Heart left ventricle (tissue), 16 donors: ENCODE measurements at regions of chr15 and their contacts with region 1.

Region 1: GRCh38 chr15:66386204-66387123 is at the start of gene MAP2K1:
- DNase-seq: peak; percentile 99 to 100 (median 99)
- ATAC-seq: peak; percentile 98 to 99 (median 99)
- H3K4me3 ChIP-seq: peak within 1 kb of the TSS; percentile 79 to 92 (median 84)
- H3K27ac ChIP-seq: peak within 1 kb of the TSS; percentile 66 to 97 (median 92)
- H3K4me1 ChIP-seq: peaks cover 0 to 47% (median 20%) of the 10 kb centered on the region in 12 donors
- H3K27me3 ChIP-seq: no peaks in the 10 kb centered on the region
- CTCF ChIP-seq: peak; percentile 54 to 98 (median 84)
- POLR2A ChIP-seq: peak in 1 of 2 donors; percentile 72
- total RNA-seq, gene MAP2K1: 34.6 to 134 (median 39.3) TPM

Region 2: DNA sequence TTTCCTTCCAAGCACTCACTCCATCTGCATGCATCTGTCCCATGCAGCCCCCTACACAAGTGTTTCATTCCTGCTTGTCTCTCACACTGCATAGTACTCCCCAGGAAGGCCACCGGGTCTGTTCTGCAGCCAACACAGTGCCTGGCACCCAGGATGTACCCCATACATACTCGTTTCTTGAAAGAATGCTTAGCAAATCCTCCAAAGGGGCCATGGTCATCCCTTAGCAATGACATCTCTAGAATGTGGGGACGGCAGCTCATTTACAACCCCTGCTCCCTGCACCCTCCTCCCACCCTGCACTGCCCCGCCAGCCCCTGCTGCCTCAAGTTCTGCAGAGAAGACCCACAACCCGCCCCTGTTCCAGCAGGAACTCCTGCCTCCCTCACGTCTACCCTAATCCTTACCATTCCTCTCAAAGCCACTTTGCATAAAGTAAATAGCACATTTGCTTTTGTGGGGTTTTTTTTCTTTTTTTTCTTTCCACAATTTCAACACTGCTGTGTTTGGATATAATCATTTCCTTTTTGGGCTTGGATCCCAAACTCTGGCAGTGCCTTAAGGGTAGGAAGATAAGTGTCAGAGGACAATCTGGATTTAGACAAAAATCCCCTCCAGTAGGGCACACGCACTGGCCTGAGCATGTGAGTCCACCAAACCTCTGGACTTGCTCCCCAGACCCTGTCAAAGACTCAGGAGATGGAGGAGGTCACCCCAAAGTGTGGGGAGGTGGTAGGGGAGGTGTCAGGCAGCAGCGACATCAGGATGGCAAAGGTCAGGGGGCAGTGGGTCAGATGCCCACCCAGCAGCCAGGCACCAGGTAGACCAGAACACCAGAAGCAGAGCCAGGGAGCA is 201.3 kb before region 1 on chr15:
- intact Hi-C with region 1: no loop called
- DNase-seq: no peak
- ATAC-seq: no peak
- H3K4me3 ChIP-seq: no peak overlapping the region
- H3K27ac ChIP-seq: no peak overlapping the region
- H3K4me1 ChIP-seq: no peaks in the 10 kb centered on the region
- H3K27me3 ChIP-seq: peaks cover 0 to 48% (median 10%) of the 10 kb centered on the region in 9 donors
- CTCF ChIP-seq: no peak
- POLR2A ChIP-seq: no peak

Region 3: DNA sequence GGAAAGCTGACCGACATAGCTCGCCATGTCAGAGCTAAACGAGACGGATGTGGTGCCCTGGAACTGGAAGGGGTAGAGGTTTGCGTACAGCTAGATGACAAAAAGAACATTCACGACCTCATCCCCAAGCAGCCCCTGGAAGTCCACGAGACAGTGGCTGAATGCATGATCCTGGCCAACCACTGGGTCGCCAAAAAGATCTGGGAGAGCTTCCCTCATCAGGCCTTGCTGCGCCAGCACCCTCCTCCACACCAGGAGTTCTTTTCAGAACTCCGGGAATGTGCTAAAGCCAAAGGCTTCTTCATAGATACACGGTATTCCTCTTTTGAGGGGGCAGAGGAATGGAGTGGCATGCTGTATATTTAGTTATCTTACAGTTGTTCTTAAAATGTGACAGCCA is 60.4 kb before region 1 on chr15:
- intact Hi-C with region 1: loop called in 1 of 10 experiments (anchors 10 kb)
- DNase-seq: no peak
- ATAC-seq: no peak
- H3K4me3 ChIP-seq: no peak overlapping the region
- H3K27ac ChIP-seq: no peak overlapping the region
- H3K4me1 ChIP-seq: no peaks in the 10 kb centered on the region
- H3K27me3 ChIP-seq: no peaks in the 10 kb centered on the region
- CTCF ChIP-seq: no peak
- POLR2A ChIP-seq: no peak

Region 4: DNA sequence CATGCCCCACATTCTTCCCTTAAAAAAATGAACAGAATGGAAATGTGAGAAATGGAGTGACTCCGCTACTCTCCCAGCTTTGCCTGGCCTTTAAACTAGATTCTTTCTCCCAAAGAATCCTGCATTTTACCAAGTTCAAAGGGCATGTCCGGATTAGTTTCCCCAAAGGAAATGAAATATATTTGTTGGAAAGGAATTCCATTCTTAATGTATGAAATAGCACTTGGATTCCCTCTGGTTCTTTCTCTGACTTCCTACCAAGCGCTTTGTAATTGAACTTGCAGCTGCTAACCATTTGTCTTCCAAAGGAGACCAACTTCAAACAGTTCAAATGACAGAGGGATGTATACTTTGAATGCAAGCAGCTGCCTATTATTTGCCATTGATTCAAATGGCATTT is 19.2 kb after region 1 on chr15:
- intact Hi-C with region 1: loop called in 1 of 10 experiments (anchors 2 kb)
- DNase-seq: no peak
- ATAC-seq: peak in 1 of 4 donors; percentile 39
- H3K4me3 ChIP-seq: no peak overlapping the region
- H3K27ac ChIP-seq: peak overlapping the region in 10 of 12 donors; percentile 9 to 72 (median 48)
- H3K4me1 ChIP-seq: peaks cover 0 to 96% (median 38%) of the 10 kb centered on the region in 12 donors
- H3K27me3 ChIP-seq: no peaks in the 10 kb centered on the region
- CTCF ChIP-seq: no peak
- POLR2A ChIP-seq: no peak

Region 5: DNA sequence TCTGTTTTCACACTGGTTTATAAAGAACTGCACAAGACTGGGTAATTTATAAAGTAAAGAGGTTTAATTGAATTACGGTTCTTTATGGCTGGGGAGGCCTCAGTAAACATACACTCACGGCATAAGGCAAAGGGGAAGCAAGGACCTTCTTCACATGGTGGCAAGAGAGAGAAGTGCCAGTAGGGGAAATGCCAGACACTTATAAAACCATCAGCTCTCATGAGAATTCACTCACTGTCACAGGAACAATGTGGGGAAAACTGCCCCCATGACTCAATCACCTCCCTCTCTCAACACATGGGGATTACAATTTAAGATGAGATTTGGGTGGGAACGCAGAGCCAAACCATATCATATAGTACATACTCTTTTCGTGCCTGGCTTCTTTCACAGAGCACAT is 42.7 kb after region 1 on chr15:
- intact Hi-C with region 1: no loop called
- DNase-seq: no peak
- ATAC-seq: no peak
- H3K4me3 ChIP-seq: no peak overlapping the region
- H3K27ac ChIP-seq: peak overlapping the region in 1 of 12 donors; percentile 23
- H3K4me1 ChIP-seq: peaks cover 0 to 48% (median 0%) of the 10 kb centered on the region in 12 donors
- H3K27me3 ChIP-seq: no peaks in the 10 kb centered on the region
- CTCF ChIP-seq: no peak
- POLR2A ChIP-seq: no peak

Region 6: DNA sequence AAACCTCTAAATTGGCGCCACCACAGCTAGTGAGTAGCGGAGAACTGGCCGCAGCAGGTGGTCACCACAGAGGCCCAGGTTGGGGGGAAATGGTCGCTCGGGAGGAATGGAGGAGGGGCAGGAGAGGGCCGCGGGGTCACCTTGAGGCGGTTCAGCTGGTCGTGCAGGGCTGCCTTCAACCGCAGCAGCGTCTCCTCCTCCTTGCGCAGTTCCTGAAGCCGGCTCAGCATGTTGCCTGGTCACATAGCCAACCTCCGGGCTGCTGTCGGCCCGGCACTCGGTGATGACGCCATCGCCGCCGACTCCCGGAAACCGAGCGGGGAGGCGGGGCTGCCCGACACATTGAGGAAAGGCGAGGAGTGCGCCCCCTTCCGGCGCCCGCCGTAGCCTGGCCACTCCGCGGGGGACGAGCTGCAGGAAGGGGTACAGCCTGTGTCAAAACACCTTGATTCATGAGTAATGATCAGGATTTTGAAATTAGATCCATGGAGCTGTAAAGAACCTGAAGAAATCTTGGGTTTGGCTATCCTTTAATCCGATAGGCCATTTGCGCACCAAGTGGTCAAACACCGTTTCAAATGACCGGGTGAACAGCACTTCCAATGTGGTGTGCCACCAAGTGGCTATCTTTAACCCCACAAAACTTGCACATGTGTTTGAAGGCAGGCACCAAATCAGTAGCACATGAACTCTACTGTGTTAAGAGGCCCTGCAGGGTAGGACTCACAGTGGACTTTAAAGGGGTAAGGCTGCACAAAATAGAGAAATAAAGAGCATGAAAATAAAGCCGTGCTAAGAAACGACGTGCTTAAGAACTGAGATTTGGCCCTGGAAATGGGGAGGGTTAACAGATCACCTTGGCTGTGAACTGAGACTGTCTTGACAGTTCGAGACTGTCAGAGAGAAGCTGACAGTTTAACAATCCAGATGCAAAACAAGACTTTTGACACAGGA is 111.3 kb after region 1 on chr15 and contains the start of gene SNAPC5:
- intact Hi-C with region 1: loop called (anchors 1 to 5 kb)
- DNase-seq: peak; percentile 96 to 98 (median 98)
- ATAC-seq: peak; percentile 95 to 99 (median 96)
- H3K4me3 ChIP-seq: peak within 1 kb of the TSS; percentile 58 to 97 (median 88)
- H3K27ac ChIP-seq: peak within 1 kb of the TSS; percentile 55 to 92 (median 85)
- H3K4me1 ChIP-seq: peaks cover 4 to 53% (median 23%) of the 10 kb centered on the region in 12 donors
- H3K27me3 ChIP-seq: no peaks in the 10 kb centered on the region
- CTCF ChIP-seq: peak; percentile 96 to 100 (median 99)
- POLR2A ChIP-seq: peak in 1 of 2 donors; percentile 66
- total RNA-seq, gene SNAPC5: 25.4 to 38.6 (median 28.3) TPM

Region 7: DNA sequence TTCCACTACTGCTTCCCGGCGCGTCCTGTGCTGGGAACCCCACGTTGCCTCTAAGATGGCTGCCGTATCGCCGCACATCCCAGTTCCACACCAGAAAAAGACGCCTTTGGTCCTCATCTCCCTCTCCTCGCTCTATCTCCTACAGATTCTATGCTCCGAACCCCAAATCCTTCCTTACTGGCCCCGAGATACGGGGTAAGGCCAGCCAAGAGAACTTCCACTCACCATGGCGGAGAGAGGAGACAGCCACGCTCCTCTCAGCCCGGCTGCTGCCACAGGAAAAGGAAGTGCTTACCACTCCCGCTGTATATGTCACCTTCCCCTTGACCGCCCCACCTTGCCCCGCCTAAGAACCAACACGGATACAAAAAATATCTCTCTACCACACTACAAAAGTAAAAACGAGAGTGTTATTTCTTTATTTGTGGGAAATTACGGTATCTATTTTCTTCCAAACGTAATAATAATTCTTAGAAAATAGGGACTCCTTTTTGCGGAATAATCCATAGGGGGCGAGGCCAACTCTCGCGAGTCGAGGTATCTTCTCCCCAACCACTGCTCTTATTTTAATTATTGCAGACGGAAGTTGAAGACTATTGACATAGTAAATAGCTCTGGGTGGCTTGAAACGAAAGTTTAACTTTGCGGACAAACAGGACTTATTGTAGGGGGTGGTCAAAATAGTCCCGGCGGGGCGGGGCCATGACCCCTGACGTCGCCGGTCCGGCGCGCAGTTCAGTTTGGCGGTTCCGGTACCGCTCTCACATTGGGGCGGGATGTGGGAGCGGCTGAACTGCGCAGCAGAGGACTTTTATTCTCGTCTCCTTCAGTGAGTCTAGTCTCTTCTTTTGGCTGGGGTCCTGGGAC is 118.3 kb after region 1 on chr15 and contains the starts of genes RPL4 and ZWILCH:
- intact Hi-C with region 1: loop called in 3 of 10 experiments (anchors 2 to 5 kb)
- DNase-seq: peak; percentile 82 to 88 (median 83)
- ATAC-seq: peak; percentile 94 to 96 (median 94)
- H3K4me3 ChIP-seq: peak within 1 kb of the TSS; percentile 47 to 96 (median 86)
- H3K27ac ChIP-seq: peak within 1 kb of the TSS; percentile 82 to 97 (median 91)
- H3K4me1 ChIP-seq: peaks cover 7 to 42% (median 22%) of the 10 kb centered on the region in 12 donors
- H3K27me3 ChIP-seq: no peaks in the 10 kb centered on the region
- CTCF ChIP-seq: peak in 1 of 12 donors; percentile 16
- POLR2A ChIP-seq: peak; percentile 42 to 84
- total RNA-seq, gene RPL4: 1,009 to 1,685 (median 1,364) TPM
- total RNA-seq, gene ZWILCH: 1.8 to 5.4 (median 2.6) TPM